B cell (primary cell): ENCODE measurements at regions of chr19 and their contacts with region 1.

Region 1: GRCh38 chr19:8505680-8506401 is 3.4 kb upstream of the PRAM1 start:
- DNase-seq: peak; percentile 82
- ATAC-seq: peak; percentile 78
- H3K4me3 ChIP-seq: peak overlapping the region in 4 of 5 experiments; percentile 64 to 72 (median 68)
- H3K4me3 Mint-ChIP-seq: peak overlapping the region; percentile 93
- H3K27ac ChIP-seq: no peak overlapping the region
- H3K27ac Mint-ChIP-seq: peak overlapping the region; percentile 68
- H3K4me1 ChIP-seq: peaks cover 0 to 24% of the 10 kb centered on the region in 2 donors
- H3K4me1 Mint-ChIP-seq: peaks cover 9% of the 10 kb centered on the region
- H3K27me3 ChIP-seq: peaks cover 0 to 10% (median 2%) of the 10 kb centered on the region in 4 experiments
- H3K27me3 Mint-ChIP-seq: no peaks in the 10 kb centered on the region
- CTCF ChIP-seq: peak; percentile 73

Region 2: GRCh38 chr19:8487137-8487851 is 18.5 kb before region 1 on chr19:
- CTCF ChIA-PET with region 1: interaction called, 11 read pairs
- POLR2A ChIA-PET with region 1: interaction called, 7 read pairs
- intact Hi-C with region 1: no loop called
- DNase-seq: peak; percentile 48
- ATAC-seq: peak; percentile 70
- H3K4me3 ChIP-seq: no peak overlapping the region
- H3K4me3 Mint-ChIP-seq: peak overlapping the region; percentile 37
- H3K27ac ChIP-seq: peak overlapping the region; percentile 29 to 50
- H3K27ac Mint-ChIP-seq: peak overlapping the region; percentile 85
- H3K4me1 ChIP-seq: peaks cover 11 to 21% of the 10 kb centered on the region in 2 donors
- H3K4me1 Mint-ChIP-seq: peaks cover 22% of the 10 kb centered on the region
- H3K27me3 ChIP-seq: no peaks in the 10 kb centered on the region
- H3K27me3 Mint-ChIP-seq: no peaks in the 10 kb centered on the region
- CTCF ChIP-seq: no peak

Region 3: DNA sequence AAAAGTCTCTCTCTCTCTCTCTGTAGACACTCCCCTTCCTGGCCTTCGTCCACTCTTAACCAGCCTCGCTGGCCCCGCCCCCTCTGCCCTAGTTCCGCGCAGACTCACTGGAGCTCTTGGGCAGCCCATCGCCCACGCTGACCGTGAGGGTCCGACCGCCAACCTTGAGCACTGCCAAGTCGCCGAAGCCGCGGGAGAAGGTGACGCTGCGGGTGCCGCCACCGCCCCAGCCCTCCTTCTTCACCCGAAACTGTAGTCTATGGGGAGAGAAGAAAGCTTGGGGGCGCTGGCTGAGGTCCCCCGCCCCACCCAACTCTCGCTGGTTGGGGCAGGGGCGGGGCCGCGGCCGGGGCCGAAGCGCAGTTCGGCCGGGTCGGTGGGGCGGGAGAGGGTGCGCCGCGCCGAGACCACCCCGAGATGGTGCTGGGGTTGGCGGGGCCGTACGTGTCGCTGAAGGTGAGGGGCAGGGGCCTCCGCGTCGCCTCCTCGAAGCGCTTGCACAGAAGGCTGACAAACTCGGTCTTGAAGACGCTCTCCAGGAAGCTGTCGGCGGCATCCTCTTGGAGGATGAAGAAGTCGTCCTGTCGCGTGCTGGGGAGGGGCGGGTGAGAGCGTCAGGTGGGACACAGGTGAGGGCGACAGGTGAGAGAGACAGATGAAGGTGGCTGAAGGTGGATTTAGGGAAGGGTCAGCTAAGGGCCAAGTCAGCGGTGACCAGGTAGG is 20.7 kb after region 1 on chr19:
- CTCF ChIA-PET with region 1: no interaction called
- POLR2A ChIA-PET with region 1: no interaction called
- intact Hi-C with region 1: no loop called
- DNase-seq: no peak
- ATAC-seq: peak; percentile 51
- H3K4me3 ChIP-seq: no peak overlapping the region
- H3K4me3 Mint-ChIP-seq: peak overlapping the region; percentile 48
- H3K27ac ChIP-seq: no peak overlapping the region
- H3K27ac Mint-ChIP-seq: peak overlapping the region; percentile 3
- H3K4me1 ChIP-seq: no peaks in the 10 kb centered on the region
- H3K4me1 Mint-ChIP-seq: peaks cover 2% of the 10 kb centered on the region
- H3K27me3 ChIP-seq: no peaks in the 10 kb centered on the region
- H3K27me3 Mint-ChIP-seq: no peaks in the 10 kb centered on the region
- CTCF ChIP-seq: no peak

Region 4: DNA sequence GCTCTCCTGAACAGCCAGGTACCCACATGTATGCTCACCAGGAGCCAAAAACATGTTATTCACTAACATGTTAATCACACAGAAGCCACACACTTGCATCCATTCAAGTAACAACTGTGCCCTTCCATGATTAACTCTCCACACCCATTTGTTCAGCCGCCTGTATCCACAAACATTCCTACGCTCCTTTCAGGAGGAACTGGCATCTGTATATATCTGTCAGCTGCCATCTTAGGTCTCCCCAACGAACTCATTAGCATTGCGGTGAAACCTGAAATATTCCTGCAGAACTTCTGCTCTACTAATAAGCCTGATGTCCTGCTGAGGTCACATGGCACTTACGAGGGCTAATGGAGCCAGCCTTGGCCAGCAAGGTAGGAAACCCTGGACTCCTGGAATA is 1397.5 kb after region 1 on chr19:
- CTCF ChIA-PET with region 1: no interaction called
- POLR2A ChIA-PET with region 1: no interaction called
- intact Hi-C with region 1: no loop called
- DNase-seq: no peak
- ATAC-seq: no peak
- H3K4me3 ChIP-seq: no peak overlapping the region
- H3K4me3 Mint-ChIP-seq: no peak overlapping the region
- H3K27ac ChIP-seq: no peak overlapping the region
- H3K27ac Mint-ChIP-seq: no peak overlapping the region
- H3K4me1 ChIP-seq: no peaks in the 10 kb centered on the region
- H3K4me1 Mint-ChIP-seq: no peaks in the 10 kb centered on the region
- H3K27me3 ChIP-seq: peaks cover 0 to 18% (median 4%) of the 10 kb centered on the region in 4 experiments
- H3K27me3 Mint-ChIP-seq: peaks cover 41% of the 10 kb centered on the region
- CTCF ChIP-seq: no peak